PC-3 (cell line): ENCODE measurements at regions of chr20 and their contacts with region 1.

Region 1: GRCh38 chr20:6395695-6396094 is 272.9 kb upstream of the FERMT1 start:
- DNase-seq: peak; percentile 80
- ATAC-seq: no peak
- H3K4me3 ChIP-seq: no peak overlapping the region
- H3K27ac ChIP-seq: no peak overlapping the region
- H3K4me1 ChIP-seq: no peaks in the 10 kb centered on the region
- H3K27me3 ChIP-seq: peaks cover 49% of the 10 kb centered on the region
- CTCF ChIP-seq: no peak

Region 2: GRCh38 chr20:6819605-6820004 is 423.9 kb after region 1 on chr20:
- CTCF ChIA-PET with region 1: no interaction called
- POLR2A ChIA-PET with region 1: interaction called, 12 read pairs
- intact Hi-C with region 1: no loop called
- DNase-seq: peak; percentile 59
- ATAC-seq: no peak
- H3K4me3 ChIP-seq: no peak overlapping the region
- H3K27ac ChIP-seq: no peak overlapping the region
- H3K4me1 ChIP-seq: no peaks in the 10 kb centered on the region
- H3K27me3 ChIP-seq: peaks cover 63% of the 10 kb centered on the region
- CTCF ChIP-seq: peak; percentile 67